Uterus (tissue), 4 donors: ENCODE measurements at regions of chr19 and their contacts with region 1.

Region 1: DNA sequence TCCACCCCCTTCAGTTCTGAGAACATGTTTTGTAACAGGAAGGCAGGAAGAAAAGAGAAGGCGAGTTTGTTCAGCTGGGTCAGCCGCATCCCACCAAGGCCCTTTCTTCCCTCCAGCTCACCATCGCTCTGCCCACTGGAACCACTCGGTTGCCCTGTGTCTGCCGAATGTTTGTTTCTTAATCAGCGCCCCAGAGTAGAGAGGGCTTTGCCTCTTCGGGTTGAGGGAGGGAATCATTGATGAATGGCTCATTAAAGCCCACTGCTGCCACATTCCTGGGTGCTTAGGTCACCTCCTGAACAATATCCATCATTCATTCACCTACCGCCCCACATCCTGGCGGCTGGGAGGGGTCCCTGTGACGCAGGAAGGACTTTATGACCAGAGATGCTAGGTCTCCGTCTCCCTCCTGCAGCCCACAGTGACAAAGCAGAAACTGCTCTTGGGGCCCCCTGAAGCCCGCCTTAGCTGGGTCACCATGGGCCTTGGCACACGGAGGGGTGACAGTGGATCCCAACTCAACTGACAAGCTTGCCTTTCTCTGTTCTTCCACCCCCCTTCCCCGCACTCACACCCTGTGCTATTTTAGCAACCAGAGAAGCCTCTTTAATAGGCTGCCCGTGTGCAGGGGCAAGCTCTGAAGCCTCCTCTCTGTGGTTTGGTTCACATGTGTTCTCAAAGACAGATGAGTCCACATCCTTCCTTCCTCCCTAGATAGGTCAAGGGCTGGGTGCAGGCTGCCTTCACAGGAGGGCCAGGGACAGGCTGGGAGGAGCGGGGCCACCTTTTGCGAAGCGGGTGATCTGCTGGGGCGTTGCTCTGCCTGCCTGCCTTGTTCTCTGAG is 46.2 kb downstream of the ACTN4 start:
- DNase-seq: no peak
- H3K4me3 ChIP-seq: no peak overlapping the region
- H3K27ac ChIP-seq: peak overlapping the region; percentile 95 to 100
- H3K4me1 ChIP-seq: peaks cover 21 to 36% of the 10 kb centered on the region in 2 donors
- H3K27me3 ChIP-seq: no peaks in the 10 kb centered on the region
- CTCF ChIP-seq: no peak
- POLR2A ChIP-seq: peak in 1 of 2 donors; percentile 8

Region 2: GRCh38 chr19:38650911-38651584 is 42.6 kb before region 1 on chr19:
- intact Hi-C with region 1: loop called (anchors 5 kb)
- DNase-seq: peak; percentile 54 to 84
- H3K4me3 ChIP-seq: peak overlapping the region; percentile 97 to 99
- H3K27ac ChIP-seq: peak overlapping the region; percentile 98
- H3K4me1 ChIP-seq: peaks cover 11 to 24% of the 10 kb centered on the region in 2 donors
- H3K27me3 ChIP-seq: no peaks in the 10 kb centered on the region
- CTCF ChIP-seq: peak in 2 of 4 experiments; percentile 14 to 48
- POLR2A ChIP-seq: peak in 1 of 2 donors; percentile 13

Region 3: GRCh38 chr19:38878575-38879399 is 185.2 kb after region 1 on chr19:
- intact Hi-C with region 1: no loop called
- DNase-seq: no peak
- H3K4me3 ChIP-seq: no peak overlapping the region
- H3K27ac ChIP-seq: peak overlapping the region in 1 of 2 donors; percentile 52
- H3K4me1 ChIP-seq: no peaks in the 10 kb centered on the region
- H3K27me3 ChIP-seq: no peaks in the 10 kb centered on the region
- CTCF ChIP-seq: no peak
- POLR2A ChIP-seq: no peak